K562 (cell line): ENCODE measurements at regions of chr22 and their contacts with region 1.

Region 1: DNA sequence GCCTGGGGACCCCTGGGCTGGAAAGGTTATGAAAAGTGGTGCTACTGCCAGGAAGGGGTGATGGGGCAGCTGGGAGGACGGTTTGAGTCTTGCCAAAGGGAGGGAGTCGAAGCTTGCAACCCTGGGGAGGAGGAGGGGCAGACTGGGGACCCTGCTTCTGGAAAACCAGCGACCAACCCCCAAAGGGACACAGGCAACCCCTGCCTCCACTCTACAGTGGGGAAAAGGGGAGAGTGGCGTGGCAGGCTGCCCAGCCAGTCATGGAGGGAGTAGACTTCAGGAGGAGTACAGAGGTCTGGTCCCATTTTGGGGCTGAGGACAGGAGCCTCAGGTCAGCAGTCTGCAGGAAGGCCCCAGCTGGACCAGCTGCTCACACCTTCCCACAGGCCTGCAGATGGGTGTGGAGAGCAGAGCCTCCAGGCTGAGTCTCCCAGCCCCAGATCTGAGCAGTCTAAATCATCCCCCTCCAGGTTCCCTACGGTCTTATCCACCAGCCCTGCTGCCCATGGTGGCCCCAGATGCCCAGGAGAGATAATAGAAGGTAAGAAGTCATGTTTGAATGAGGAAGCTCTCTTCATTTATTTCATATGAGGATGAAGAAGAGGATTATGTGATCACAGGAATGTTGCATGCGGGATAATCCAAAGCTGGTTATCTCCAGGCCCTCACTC is 3.3 kb downstream of the DDT start:
- DNase-seq: peak; percentile 11 to 29 (median 12)
- ATAC-seq: no peak
- H3K4me3 ChIP-seq: no peak overlapping the region
- H3K27ac ChIP-seq: no peak overlapping the region
- H3K4me1 ChIP-seq: peaks cover 0 to 4% of the 10 kb centered on the region in 2 experiments; a peak in 2 of 5 replicates
- H3K27me3 ChIP-seq: no peaks in the 10 kb centered on the region
- CTCF ChIP-seq: no peak
- EP300 ChIP-seq: no peak
- POLR2A ChIP-seq: no peak
- RAD21 ChIP-seq: no peak

Region 2: GRCh38 chr22:23925020-23925606 is 45.8 kb before region 1 on chr22:
- CTCF ChIA-PET with region 1: no interaction called
- POLR2A ChIA-PET with region 1: interaction called, 6 read pairs
- in situ Hi-C with region 1: loop called (anchors 5 kb)
- intact Hi-C with region 1: no loop called
- DNase-seq: peak in 2 of 4 experiments; percentile 0 to 1
- ATAC-seq: no peak
- H3K4me3 ChIP-seq: no peak overlapping the region
- H3K27ac ChIP-seq: no peak overlapping the region
- H3K4me1 ChIP-seq: no peaks in the 10 kb centered on the region
- H3K27me3 ChIP-seq: no peaks in the 10 kb centered on the region
- CTCF ChIP-seq: no peak
- EP300 ChIP-seq: no peak
- POLR2A ChIP-seq: no peak
- RAD21 ChIP-seq: no peak

Region 3: DNA sequence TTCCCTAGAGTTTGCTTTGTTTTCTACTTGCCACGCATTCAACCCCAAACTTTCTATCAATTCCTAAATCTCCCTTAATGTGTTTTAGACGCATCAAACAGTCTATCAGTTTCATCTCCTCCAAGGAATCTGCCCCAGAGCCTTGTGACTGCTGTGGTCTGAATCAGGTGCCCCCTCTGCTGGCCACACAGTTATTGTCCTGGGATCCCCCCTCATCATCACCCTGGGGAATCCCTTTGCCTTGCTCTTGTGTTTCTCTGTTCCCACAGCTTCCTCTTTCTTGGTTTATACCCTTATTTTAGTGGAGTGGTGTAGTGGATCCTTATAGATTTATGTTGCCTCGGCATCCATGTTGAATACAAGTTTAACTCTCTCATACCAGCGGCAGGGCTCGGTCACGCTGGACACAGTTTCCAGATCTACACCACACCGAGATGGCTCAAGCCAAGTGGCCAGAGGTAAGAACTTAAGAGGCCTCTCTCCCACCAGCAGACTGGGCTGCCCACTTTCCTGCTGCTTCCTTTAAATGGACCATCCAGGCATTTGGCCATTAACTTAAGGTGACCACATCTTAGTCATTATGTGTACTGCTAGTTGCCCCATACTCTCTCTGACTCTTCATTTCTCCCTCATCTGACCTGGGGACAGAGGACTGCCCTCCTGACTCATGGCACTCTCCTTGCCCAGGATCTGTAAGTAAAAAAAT is 532.3 kb after region 1 on chr22:
- CTCF ChIA-PET with region 1: no interaction called
- POLR2A ChIA-PET with region 1: no interaction called
- in situ Hi-C with region 1: loop called (anchors 25 kb)
- intact Hi-C with region 1: no loop called
- DNase-seq: peak; percentile 63 to 71 (median 66)
- ATAC-seq: peak; percentile 93
- H3K4me3 ChIP-seq: no peak overlapping the region
- H3K27ac ChIP-seq: no peak overlapping the region
- H3K4me1 ChIP-seq: peaks cover 0 to 5% of the 10 kb centered on the region in 2 experiments; a peak in 1 of 5 replicates
- H3K27me3 ChIP-seq: peaks cover 0 to 27% of the 10 kb centered on the region in 2 experiments; a peak in 2 of 5 replicates
- CTCF ChIP-seq: peak; percentile 68 to 81 (median 77)
- EP300 ChIP-seq: no peak
- POLR2A ChIP-seq: no peak
- RAD21 ChIP-seq: peak; percentile 71 to 83